Gastrocnemius medialis (tissue), 4 donors: ENCODE measurements at regions of chr3 and their contacts with region 1.

Region 1: GRCh38 chr3:50542177-50543034 is 25.1 kb downstream of the C3orf18 start:
- DNase-seq: peak in 1 of 2 donors; percentile 55
- ATAC-seq: peak; percentile 66 to 83
- H3K4me3 ChIP-seq: no peak overlapping the region
- H3K27ac ChIP-seq: no peak overlapping the region
- H3K4me1 ChIP-seq: no peaks in the 10 kb centered on the region
- H3K27me3 ChIP-seq: no peaks in the 10 kb centered on the region
- CTCF ChIP-seq: peak; percentile 61 to 91 (median 88)
- POLR2A ChIP-seq: no peak

Region 2: GRCh38 chr3:50347194-50347918 is 195.1 kb before region 1 on chr3:
- in situ Hi-C with region 1: loop called (anchors 5 to 25 kb)
- intact Hi-C with region 1: loop called (anchors 1 kb)
- DNase-seq: peak in 1 of 2 donors; percentile 51
- ATAC-seq: no peak
- H3K4me3 ChIP-seq: no peak overlapping the region
- H3K27ac ChIP-seq: peak overlapping the region in 3 of 4 donors; percentile 7 to 14 (median 12)
- H3K4me1 ChIP-seq: peaks cover 24 to 45% of the 10 kb centered on the region in 2 donors
- H3K27me3 ChIP-seq: no peaks in the 10 kb centered on the region
- CTCF ChIP-seq: peak in 4 of 5 experiments; percentile 52 to 62 (median 58)
- POLR2A ChIP-seq: no peak

Region 3: DNA sequence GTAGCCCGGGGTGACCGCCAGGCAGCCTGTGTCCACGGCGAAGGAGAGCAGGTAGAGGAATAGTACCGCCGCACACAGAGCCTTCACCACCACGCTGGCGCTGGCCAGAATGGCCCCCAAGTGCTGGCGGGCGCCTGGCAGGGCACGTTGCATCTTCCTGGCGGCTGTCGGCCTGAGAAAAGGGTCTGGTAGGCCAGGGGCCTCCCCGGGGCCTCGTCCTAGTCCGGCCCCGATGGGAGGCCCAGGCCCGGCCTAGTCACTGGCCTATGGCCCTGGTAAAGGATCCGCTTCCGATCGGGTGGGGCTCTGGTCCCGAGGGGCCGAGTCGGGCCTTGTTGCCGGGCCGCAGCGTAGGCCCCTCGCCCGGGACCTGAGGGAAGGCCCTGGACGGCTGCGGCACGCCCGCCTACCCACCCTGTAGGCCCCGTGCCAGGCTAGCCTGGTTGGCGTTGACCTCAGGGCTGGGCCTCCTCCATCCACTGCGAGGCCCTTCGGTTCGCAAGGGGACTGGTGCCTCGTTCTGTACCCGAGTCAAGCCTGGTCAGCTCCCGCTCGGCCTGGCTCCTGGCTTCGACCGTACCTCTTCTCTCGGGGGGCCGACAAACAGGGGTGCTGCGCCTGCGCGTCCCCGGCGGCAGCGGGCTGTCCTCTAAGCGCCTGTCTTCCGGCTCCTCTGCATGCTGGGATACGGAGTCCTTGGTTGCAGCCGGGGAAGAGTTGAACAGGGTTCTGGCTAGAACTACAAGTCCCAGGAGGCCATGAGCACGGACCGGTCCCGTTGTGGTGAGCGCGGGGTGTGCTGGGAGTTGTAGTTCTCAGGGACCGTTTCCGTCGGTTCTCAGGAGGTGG is 183.3 kb before region 1 on chr3 and contains the start of gene TMEM115:
- in situ Hi-C with region 1: loop called in 1 of 4 experiments (anchors 25 kb)
- intact Hi-C with region 1: no loop called
- DNase-seq: peak; percentile 99
- ATAC-seq: peak; percentile 97 to 99
- H3K4me3 ChIP-seq: peak within 1 kb of the TSS; percentile 79 to 99 (median 82)
- H3K27ac ChIP-seq: peak within 1 kb of the TSS; percentile 93 to 97 (median 94)
- H3K4me1 ChIP-seq: peaks cover 40 to 43% of the 10 kb centered on the region in 2 donors
- H3K27me3 ChIP-seq: no peaks in the 10 kb centered on the region
- CTCF ChIP-seq: no peak
- POLR2A ChIP-seq: peak; percentile 75 to 79
- total RNA-seq, gene TMEM115: 26.9 to 57.8 (median 42.3) TPM

Region 4: GRCh38 chr3:50423543-50423942 is 118.9 kb before region 1 on chr3:
- in situ Hi-C with region 1: no loop called
- intact Hi-C with region 1: no loop called
- DNase-seq: no peak
- ATAC-seq: no peak
- H3K4me3 ChIP-seq: no peak overlapping the region
- H3K27ac ChIP-seq: no peak overlapping the region
- H3K4me1 ChIP-seq: no peaks in the 10 kb centered on the region
- H3K27me3 ChIP-seq: no peaks in the 10 kb centered on the region
- CTCF ChIP-seq: no peak
- POLR2A ChIP-seq: no peak

Region 5: DNA sequence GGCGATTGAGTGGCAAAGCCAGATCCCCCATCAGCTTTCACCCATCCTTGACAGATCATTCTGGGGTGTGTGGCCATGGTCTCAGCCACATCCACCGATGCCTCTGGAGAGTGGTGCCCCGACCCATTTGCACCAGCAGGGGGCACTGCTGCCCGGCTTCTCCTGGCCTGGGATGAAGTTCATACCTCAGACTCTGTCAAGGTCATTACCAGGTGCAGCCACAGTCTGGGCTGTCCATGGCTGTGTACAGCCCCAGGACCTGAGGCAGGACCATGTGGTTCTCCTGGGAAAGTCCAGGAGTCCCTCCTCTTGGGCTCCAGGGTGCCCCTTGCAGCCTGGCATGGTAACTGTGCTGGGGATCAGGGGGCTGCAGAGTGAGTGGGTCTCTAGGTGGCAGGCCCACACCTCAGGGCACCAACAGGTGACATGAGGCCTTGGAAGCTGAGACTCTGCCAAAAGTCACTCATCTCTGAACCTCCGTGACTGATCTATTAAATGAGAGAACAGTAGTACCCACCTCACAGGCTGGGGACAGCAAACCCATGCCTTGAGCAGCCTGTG is 106.2 kb before region 1 on chr3:
- in situ Hi-C with region 1: loop called in 2 of 4 experiments (anchors 10 kb)
- intact Hi-C with region 1: loop called (anchors 1 kb)
- DNase-seq: peak in 1 of 2 donors; percentile 46
- ATAC-seq: peak; percentile 52 to 82
- H3K4me3 ChIP-seq: no peak overlapping the region
- H3K27ac ChIP-seq: no peak overlapping the region
- H3K4me1 ChIP-seq: no peaks in the 10 kb centered on the region
- H3K27me3 ChIP-seq: no peaks in the 10 kb centered on the region
- CTCF ChIP-seq: peak; percentile 59 to 77 (median 65)
- POLR2A ChIP-seq: no peak

Region 6: DNA sequence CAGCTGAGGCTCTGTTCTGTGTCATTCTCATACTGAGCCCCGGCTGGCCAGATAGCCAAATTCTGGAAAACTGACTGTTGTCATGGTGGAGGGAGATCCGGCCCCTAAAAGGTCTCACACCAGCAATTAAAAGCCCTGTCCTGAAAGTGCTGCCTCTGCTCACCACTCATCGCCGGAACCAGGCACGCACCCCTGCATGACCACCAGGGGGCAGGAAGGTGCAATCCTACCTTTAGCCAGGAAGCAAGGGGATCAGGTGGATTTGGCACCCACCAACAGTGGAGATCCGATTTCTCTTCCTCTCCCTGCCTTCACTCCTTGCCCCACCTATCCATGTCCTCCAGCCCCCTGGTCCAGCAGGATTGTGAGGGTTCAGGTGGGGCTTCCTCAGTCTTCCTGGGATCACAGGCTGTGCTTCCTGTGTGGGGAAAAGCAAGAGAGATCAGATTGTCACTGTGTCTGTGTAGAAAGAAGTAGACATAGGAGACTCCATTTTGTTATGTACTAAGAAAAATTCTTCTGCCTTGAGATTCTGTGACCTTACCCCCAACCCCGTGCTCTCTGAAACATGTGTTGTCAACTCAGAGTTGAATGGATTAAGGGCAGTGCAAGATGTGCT is 22.8 kb before region 1 on chr3:
- in situ Hi-C with region 1: no loop called
- intact Hi-C with region 1: loop called (anchors 2 kb)
- DNase-seq: peak; percentile 22 to 56
- ATAC-seq: peak; percentile 73 to 75
- H3K4me3 ChIP-seq: no peak overlapping the region
- H3K27ac ChIP-seq: no peak overlapping the region
- H3K4me1 ChIP-seq: peaks cover 0 to 12% of the 10 kb centered on the region in 2 donors
- H3K27me3 ChIP-seq: no peaks in the 10 kb centered on the region
- CTCF ChIP-seq: peak; percentile 68 to 92 (median 85)
- POLR2A ChIP-seq: no peak

Region 7: GRCh38 chr3:50639055-50639494 is 96.7 kb after region 1 on chr3:
- in situ Hi-C with region 1: no loop called
- intact Hi-C with region 1: no loop called
- DNase-seq: no peak
- ATAC-seq: peak; percentile 10 to 60
- H3K4me3 ChIP-seq: no peak overlapping the region
- H3K27ac ChIP-seq: peak overlapping the region; percentile 40 to 68 (median 52)
- H3K4me1 ChIP-seq: peaks cover 29 to 48% of the 10 kb centered on the region in 2 donors
- H3K27me3 ChIP-seq: no peaks in the 10 kb centered on the region
- CTCF ChIP-seq: no peak
- POLR2A ChIP-seq: no peak